Vagina (tissue), 2 donors: ENCODE measurements at regions of chrX and their contacts with region 1.

Region 1: DNA sequence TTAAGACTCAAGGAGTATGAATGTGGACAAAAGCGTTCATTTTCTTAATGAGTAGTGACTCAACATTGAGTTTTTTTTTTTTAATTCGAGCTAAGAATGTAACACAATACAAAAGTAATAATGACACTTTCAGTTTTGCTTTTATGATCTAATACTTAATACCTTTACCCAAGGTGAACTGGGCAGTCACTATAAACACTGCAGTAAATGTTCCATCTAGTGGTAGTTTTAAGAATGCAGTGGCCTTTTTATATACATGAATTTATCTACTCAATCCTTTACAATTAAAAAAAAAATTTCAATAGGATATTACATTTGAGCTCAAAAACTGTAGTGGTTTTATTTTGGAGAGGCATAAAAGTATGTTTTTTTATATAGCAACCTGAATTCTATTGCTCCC is 33.9 kb downstream of the PDK3 start:
- DNase-seq: no peak
- H3K4me3 ChIP-seq: no peak overlapping the region
- H3K27ac ChIP-seq: no peak overlapping the region
- H3K4me1 ChIP-seq: peaks cover 11% of the 10 kb centered on the region
- H3K27me3 ChIP-seq: no peaks in the 10 kb centered on the region
- CTCF ChIP-seq: peak in 2 of 3 experiments; percentile 33 to 50
- POLR2A ChIP-seq: no peak

Region 2: DNA sequence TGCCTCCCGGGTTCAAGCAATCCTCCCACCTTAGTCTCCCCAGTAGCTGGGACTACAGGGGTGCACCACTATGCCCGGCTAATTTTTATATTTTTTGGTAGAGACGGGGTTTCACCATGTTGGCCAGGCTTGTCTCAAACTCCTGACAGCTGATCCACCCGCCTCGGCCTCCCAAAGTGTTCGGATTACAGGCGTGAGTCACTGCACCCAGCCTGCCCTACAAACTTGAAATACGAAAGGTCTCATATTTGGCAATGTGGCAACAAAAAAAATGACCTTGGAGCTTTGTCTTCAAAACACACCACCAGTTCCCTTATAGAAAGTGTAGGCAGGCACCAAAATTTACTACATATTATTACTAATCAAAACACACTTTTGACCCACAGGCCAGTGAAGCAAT is 1187.2 kb before region 1 on chrX:
- intact Hi-C with region 1: loop called (anchors 5 kb)
- DNase-seq: no peak
- H3K4me3 ChIP-seq: no peak overlapping the region
- H3K27ac ChIP-seq: no peak overlapping the region
- H3K4me1 ChIP-seq: no peaks in the 10 kb centered on the region
- H3K27me3 ChIP-seq: no peaks in the 10 kb centered on the region
- CTCF ChIP-seq: no peak
- POLR2A ChIP-seq: no peak

Region 3: GRCh38 chrX:24392709-24393108 is 106.3 kb before region 1 on chrX:
- intact Hi-C with region 1: loop called (anchors 5 kb)
- DNase-seq: no peak
- H3K4me3 ChIP-seq: no peak overlapping the region
- H3K27ac ChIP-seq: no peak overlapping the region
- H3K4me1 ChIP-seq: no peaks in the 10 kb centered on the region
- H3K27me3 ChIP-seq: no peaks in the 10 kb centered on the region
- CTCF ChIP-seq: no peak
- POLR2A ChIP-seq: no peak